Activated B cell treated with CpG ODN at 0.5 μM for 24 hours (primary cell): ENCODE measurements at regions of chr12 and their contacts with region 1.

Region 1: DNA sequence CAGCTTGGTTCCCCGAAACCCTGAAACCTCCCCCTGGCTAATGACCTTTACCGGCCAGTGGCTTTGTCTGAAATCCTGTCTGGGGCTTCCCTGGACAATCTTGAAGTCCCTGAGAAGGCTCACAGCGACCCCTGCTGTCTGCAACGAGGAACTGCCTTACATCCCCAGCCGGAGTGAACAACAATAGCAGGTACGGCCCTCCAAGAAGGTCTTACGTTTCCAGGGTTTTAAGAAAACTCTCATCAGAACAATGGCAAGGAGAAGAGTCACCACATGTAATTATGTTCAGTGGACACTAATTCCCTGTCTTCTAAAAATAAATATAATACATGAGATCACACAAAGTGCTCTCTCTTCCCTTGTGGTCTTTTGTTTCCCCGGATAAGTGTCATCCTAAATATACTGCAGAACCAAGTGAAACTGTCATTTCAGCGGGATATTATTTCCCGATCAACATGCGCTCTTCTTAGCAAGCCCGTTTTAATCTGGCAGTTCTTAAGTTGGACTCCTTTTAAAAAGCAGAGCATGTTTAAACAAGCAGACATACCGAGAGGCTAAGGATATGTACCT is 53.3 kb downstream of the RBM19 start:
- DNase-seq: peak; percentile 32
- ATAC-seq: peak; percentile 57
- H3K4me3 Mint-ChIP-seq: no peak overlapping the region
- H3K27ac Mint-ChIP-seq: no peak overlapping the region
- H3K4me1 Mint-ChIP-seq: no peaks in the 10 kb centered on the region
- H3K27me3 Mint-ChIP-seq: no peaks in the 10 kb centered on the region
- CTCF ChIP-seq: peak; percentile 15

Region 2: DNA sequence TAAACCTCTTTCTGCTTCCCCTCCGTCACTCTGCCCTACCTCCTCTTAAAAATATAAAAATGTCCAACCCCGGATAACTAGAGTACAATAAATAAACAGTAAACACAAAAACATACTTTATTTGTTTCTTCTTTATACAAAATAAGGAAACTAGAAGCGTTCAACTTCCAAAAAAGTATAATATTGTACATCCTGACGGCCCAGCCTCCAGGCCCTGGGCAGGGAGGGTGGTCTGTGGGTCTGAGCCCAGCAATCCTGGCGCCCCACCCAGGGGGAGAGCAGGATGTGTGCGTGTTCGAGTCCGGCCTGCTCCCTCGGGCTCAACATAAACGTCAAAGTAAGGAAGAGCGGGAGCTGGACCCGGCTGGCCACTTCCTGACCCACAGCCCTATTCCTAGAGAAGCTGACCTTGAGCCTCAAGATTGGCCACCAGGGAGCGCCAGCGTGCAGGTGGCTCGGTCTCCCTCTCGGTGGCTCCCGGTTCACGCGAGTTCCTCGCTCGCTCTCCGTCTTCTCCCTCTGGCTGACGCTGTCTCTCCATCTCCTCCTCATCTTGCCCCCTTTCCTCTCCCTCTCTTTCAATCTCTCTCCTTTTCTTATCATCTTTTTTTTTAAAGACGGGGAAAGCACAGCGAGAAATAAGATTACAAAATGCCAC is 450.6 kb before region 1 on chr12:
- CTCF ChIA-PET with region 1: no interaction called
- POLR2A ChIA-PET with region 1: no interaction called
- intact Hi-C with region 1: loop called (anchors 1 kb)
- DNase-seq: peak; percentile 55
- ATAC-seq: peak; percentile 37
- H3K4me3 Mint-ChIP-seq: peak overlapping the region; percentile 77
- H3K27ac Mint-ChIP-seq: peak overlapping the region; percentile 50
- H3K4me1 Mint-ChIP-seq: peaks cover 22% of the 10 kb centered on the region
- H3K27me3 Mint-ChIP-seq: peaks cover 71% of the 10 kb centered on the region
- CTCF ChIP-seq: no peak